Activated B cell treated with CpG ODN at 0.5 μM for 24 hours (primary cell): ENCODE measurements at regions of chr5 and their contacts with region 1.

Region 1: GRCh38 chr5:16552666-16553343 is 64.0 kb downstream of the RETREG1 start:
- DNase-seq: no peak
- ATAC-seq: peak; percentile 79
- H3K4me3 Mint-ChIP-seq: no peak overlapping the region
- H3K27ac Mint-ChIP-seq: no peak overlapping the region
- H3K4me1 Mint-ChIP-seq: peaks cover 34% of the 10 kb centered on the region
- H3K27me3 Mint-ChIP-seq: no peaks in the 10 kb centered on the region
- CTCF ChIP-seq: no peak

Region 2: GRCh38 chr5:16465544-16466466 is 87.0 kb before region 1 on chr5 and contains the start of gene ZNF622:
- CTCF ChIA-PET with region 1: interaction called, 4 read pairs
- POLR2A ChIA-PET with region 1: no interaction called
- intact Hi-C with region 1: loop called (anchors 1 kb)
- DNase-seq: peak; percentile 82
- ATAC-seq: peak; percentile 93
- H3K4me3 Mint-ChIP-seq: peak within 1 kb of the TSS; percentile 99
- H3K27ac Mint-ChIP-seq: peak within 1 kb of the TSS; percentile 95
- H3K4me1 Mint-ChIP-seq: peaks cover 78% of the 10 kb centered on the region
- H3K27me3 Mint-ChIP-seq: no peaks in the 10 kb centered on the region
- CTCF ChIP-seq: no peak
- total RNA-seq, gene ZNF622: 35.5 and 39.5 TPM in 2 replicates